ENCODE measurements at regions of chr20 and their contacts with region 1.

Region 1: DNA sequence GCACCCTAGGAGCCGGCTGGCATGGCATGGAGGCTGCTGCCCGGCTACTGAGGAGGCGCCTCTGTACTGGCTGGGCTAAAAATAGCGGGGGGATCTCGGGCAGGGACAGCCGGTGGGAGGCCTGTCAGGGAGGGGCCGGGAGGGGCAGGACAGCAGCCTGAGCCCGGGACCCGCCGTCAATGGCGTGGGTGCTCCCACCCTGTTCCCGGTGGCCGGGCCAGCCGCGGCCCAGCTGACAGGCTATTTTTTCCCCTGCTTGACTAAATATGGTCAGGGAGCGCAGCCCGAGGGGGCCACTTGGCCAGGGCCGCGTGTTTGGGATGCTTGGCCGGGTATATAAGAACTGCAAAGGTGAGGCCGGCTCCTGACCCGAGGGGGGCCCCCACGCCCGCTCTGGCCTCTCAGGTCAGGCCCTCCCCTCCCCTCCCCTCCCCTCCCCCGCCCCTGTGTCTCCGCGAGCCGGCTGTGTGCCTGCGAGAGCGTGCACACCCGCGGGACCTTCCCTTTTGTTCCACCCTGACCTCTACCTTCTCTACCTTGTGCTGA is 74.4 kb upstream of the GATA5 start:
- DNase-seq: peak; percentile 78
- ATAC-seq: peak; percentile 70 to 76

Region 2: GRCh38 chr20:62516345-62516744 is 33.8 kb before region 1 on chr20:
- intact Hi-C with region 1: loop called in 1 of 2 experiments (anchors 5 kb)
- DNase-seq: no peak
- ATAC-seq: peak in 1 of 2 donors; percentile 39

Region 3: DNA sequence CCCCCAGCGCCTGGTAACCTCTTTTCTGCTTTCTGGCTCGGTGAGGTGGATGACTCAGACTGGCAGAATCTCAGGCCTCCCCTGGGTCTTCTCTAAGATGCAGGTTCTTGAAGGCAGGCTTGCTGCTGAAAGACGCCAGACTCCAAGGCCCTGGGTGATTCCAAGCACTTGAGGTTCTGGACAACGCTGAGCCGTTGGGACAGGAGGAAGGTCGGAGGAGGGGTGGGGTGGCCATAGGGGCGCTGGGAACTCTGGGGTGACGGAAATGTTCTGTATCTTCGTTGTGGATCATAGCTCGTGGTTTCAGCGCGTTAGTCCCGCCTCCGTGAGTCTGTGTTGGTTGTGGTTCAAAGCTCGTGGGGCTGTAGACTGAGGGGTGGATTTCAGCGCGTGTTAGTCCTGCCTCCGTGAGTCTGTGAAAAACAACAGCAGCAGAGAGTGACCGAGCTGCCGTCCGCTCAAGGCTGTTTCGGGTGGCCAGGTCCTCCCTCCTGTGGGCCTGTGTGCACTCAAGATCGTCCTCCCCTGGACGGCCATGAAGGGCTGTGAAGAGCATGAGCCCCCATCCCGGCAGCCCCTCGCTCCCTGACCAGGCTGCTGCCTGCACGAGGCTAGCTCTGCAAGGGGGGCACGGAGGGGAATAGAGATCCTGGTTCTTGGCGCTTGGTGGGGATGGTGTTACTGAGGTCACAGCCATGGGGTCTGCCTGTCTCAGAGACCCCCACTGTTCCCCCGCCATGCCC is 166.2 kb after region 1 on chr20:
- intact Hi-C with region 1: no loop called
- DNase-seq: no peak
- ATAC-seq: no peak